Colonic mucosa (tissue), 4 donors: ENCODE measurements at regions of chr2 and their contacts with region 1.

Region 1: DNA sequence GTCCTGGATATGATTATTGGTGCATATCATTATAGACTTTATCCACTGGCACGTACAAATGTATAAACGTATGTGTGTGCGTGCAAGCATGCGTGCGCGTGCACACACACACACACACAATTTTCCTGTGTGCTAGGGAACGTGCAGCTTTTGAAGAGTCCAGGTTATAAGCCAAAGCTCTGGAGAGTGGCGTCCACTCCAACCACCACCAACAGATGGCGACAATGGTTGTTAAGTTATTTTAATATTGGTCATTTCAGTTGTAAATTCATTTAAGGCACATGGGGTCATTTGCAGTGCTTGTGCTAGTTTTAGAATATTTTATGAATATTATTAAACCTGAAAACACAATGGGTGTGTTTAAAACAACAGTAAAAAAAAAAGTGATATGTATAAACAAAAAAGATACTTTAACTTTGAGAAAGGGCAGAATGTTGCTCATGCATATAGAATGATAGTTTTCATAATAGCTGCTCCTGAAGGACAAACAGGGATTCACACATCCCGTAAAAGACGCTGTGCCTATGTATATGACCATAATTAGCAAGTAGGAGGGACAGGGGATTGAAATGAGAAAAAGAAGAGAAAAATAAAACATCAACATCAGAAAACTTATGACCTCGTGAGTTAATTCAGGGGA is 124.2 kb upstream of the ITGB6 start:
- DNase-seq: peak; percentile 58
- H3K4me3 ChIP-seq: no peak overlapping the region
- H3K27ac ChIP-seq: no peak overlapping the region
- H3K4me1 ChIP-seq: peaks cover 2% of the 10 kb centered on the region
- H3K27me3 ChIP-seq: no peaks in the 10 kb centered on the region
- CTCF ChIP-seq: peak; percentile 70

Region 2: GRCh38 chr2:160006475-160006874 is 317.8 kb before region 1 on chr2:
- intact Hi-C with region 1: no loop called
- DNase-seq: no peak
- H3K4me3 ChIP-seq: no peak overlapping the region
- H3K27ac ChIP-seq: no peak overlapping the region
- H3K4me1 ChIP-seq: no peaks in the 10 kb centered on the region
- H3K27me3 ChIP-seq: no peaks in the 10 kb centered on the region
- CTCF ChIP-seq: no peak

Region 3: DNA sequence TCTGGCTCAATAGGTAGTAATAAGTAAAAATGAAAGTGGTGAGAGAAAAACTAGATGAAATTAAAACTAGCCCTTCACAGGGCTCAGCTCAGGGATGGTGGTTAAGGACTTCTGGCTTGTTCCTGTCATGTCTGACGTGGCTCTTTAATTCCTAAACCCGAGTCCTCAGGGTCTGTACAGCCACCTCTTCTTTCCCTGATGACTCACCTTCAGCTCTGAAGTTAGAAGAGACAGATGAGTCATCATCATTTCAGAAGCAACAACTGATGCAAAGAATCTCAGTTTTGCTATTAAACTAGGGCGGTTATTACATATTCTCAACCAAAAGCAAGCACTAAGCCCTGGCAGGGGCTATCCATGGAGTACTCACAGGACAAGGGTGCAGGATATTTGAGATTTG is 100.2 kb before region 1 on chr2:
- intact Hi-C with region 1: no loop called
- DNase-seq: no peak
- H3K4me3 ChIP-seq: no peak overlapping the region
- H3K27ac ChIP-seq: peak overlapping the region; percentile 5
- H3K4me1 ChIP-seq: peaks cover 11% of the 10 kb centered on the region
- H3K27me3 ChIP-seq: no peaks in the 10 kb centered on the region
- CTCF ChIP-seq: no peak

Region 4: DNA sequence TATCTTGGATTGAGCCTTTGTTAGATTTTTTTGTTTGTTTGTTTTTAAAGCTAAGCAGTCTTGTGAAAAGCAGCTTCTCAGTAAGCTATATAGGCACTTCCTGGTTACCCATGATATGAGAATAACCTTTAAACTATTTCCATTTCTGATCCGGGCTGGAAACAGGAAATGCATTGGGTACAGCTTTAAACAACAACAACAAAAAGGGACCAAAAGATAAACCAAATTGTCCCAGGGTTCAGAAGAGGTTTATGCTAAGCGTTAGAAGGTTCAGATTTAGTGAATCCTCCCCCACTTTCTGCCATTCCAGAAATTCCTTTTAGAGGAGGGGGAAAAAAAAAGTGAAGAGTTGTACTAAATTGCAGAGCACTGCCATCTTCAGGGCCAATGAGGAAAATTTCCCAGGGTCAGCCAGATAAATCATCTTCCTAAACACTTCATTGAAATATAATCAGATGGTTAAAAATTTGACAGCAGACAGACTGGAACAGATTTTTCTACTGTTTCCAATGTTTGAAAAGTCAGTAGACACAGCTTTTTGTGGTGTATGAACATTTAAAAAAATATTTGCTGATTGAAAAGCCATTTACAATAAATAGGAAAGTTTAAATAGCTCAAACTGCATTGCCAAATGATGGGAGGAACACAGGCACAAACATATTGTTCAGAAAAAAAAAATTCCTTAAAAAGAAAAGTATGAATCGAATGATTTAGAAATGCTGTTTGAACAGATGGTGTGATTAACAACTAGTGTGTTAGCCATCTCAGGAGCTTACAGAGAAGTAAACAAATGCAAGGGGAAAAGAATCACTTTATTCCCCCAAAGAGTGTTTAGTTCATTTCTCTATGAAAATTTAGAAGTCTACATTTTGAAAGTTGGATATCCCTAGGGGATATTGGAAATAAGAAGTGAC is 646.0 kb after region 1 on chr2:
- intact Hi-C with region 1: loop called (anchors 10 kb)
- DNase-seq: peak; percentile 33
- H3K4me3 ChIP-seq: no peak overlapping the region
- H3K27ac ChIP-seq: no peak overlapping the region
- H3K4me1 ChIP-seq: no peaks in the 10 kb centered on the region
- H3K27me3 ChIP-seq: no peaks in the 10 kb centered on the region
- CTCF ChIP-seq: peak; percentile 70